ENCODE measurements at regions of chr2 and their contacts with region 1.

Region 1: DNA sequence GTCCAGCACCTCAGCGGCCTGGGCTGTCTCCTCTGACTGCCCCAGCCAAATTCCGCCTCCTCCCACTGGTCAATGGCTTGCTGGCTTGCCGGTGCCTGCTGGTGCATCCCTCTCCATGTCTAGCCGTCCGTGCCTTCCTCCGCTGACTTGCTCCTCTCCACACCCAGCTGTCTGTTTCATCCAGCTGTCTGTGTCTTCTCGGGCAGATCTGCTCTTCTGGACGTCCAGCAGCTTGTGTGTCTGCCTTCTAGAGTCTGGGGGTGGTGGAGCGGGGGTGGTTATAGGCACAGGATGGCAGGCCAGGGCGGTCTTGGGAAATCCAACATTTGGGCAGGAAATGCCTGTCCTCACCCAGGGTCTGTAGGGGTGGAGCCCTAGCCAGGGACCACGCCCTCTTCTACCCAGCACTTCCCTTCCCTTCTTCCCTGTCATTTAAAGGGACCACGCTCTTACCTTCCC is 369.2 kb downstream of the GALNT13 start:
- DNase-seq: no peak
- H3K4me3 ChIP-seq: no peak overlapping the region
- H3K27ac ChIP-seq: no peak overlapping the region
- H3K4me1 ChIP-seq: no peaks in the 10 kb centered on the region
- H3K27me3 ChIP-seq: no peaks in the 10 kb centered on the region
- CTCF ChIP-seq: no peak
- POLR2A ChIP-seq: no peak

Region 2: DNA sequence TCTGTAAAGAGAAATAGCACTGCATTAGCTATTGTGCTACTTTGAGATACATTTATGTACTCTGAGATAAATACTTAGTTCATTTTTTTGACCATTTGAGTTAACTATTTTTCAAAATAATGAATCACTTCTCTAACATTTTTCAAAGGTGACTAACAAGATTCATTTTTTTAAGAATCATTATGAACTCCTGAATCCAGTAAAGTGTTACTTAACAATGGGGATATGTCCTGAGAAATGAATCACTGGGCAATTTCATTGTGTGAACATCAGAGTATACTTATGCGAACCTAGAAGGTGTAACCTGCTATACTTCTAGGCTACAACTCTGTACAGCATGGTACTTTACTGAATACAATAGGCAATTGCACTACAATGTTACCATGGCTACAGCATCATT is 1166.7 kb before region 1 on chr2:
- CTCF ChIA-PET with region 1: no interaction called
- POLR2A ChIA-PET with region 1: no interaction called
- dilution Hi-C with region 1: no loop called
- intact Hi-C with region 1: loop called (anchors 5 kb)
- DNase-seq: no peak
- H3K4me3 ChIP-seq: no peak overlapping the region
- H3K27ac ChIP-seq: no peak overlapping the region
- H3K4me1 ChIP-seq: no peaks in the 10 kb centered on the region
- H3K27me3 ChIP-seq: no peaks in the 10 kb centered on the region
- CTCF ChIP-seq: no peak
- POLR2A ChIP-seq: no peak

Region 3: GRCh38 chr2:154447727-154448418 is 206.9 kb after region 1 on chr2:
- CTCF ChIA-PET with region 1: no interaction called
- POLR2A ChIA-PET with region 1: no interaction called
- dilution Hi-C with region 1: no loop called
- intact Hi-C with region 1: no loop called
- DNase-seq: no peak
- H3K4me3 ChIP-seq: no peak overlapping the region
- H3K27ac ChIP-seq: no peak overlapping the region
- H3K4me1 ChIP-seq: no peaks in the 10 kb centered on the region
- H3K27me3 ChIP-seq: no peaks in the 10 kb centered on the region
- CTCF ChIP-seq: no peak
- POLR2A ChIP-seq: no peak